ENCODE measurements at regions of chr1 and their contacts with region 1.

Region 1: GRCh38 chr1:221766210-221766609 is 24.3 kb upstream of the DUSP10 start:
- DNase-seq: no peak
- H3K4me3 ChIP-seq: no peak overlapping the region
- H3K27ac ChIP-seq: no peak overlapping the region
- H3K4me1 ChIP-seq: no peaks in the 10 kb centered on the region
- H3K27me3 ChIP-seq: no peaks in the 10 kb centered on the region
- CTCF ChIP-seq: no peak

Region 2: GRCh38 chr1:221729771-221730330 is 36.4 kb before region 1 on chr1:
- CTCF ChIA-PET with region 1: no interaction called
- POLR2A ChIA-PET with region 1: no interaction called
- intact Hi-C with region 1: loop called (anchors 1 kb)
- DNase-seq: no peak
- H3K4me3 ChIP-seq: no peak overlapping the region
- H3K27ac ChIP-seq: no peak overlapping the region
- H3K4me1 ChIP-seq: no peaks in the 10 kb centered on the region
- H3K27me3 ChIP-seq: no peaks in the 10 kb centered on the region
- CTCF ChIP-seq: no peak

Region 3: DNA sequence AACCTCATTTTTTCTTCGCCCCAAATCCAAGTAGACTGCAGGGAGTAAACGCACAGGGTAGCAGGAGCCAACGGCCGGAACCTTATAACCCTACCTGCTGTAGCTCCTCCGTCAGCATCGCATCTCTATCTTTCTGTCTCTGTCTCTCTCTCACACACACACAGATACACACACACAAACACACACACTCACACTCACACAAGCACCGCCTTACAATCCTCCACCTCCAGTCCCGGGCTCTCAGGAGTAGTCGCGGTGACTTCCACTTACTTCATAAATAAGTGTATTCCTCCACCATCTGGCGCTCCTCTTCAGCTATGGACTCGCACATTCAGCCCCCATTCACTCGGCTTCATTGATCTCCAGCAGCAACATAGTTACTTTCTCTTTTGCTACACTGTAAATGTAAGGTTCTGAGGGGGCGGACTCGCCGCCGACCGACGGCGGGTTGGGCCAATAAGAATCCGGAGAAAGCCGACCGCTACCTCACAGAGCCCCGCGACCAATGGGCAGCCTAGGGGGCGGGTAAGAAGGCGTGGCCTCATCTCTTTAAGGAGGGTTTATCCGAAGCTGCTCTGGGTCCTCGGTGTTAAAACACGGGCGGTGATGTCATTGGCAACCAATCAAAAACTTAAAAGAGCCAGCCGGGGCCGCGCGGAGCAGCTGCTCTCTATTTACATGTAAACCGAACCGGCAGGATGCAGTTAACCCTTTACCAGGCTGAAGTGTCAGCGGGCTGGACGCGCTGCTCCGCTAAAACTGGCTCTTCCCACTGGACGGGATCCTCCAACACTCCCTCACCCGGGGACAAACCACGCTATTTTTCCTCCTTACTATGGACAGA is 24.3 kb before region 1 on chr1 and contains the start of gene DUSP10:
- CTCF ChIA-PET with region 1: no interaction called
- POLR2A ChIA-PET with region 1: no interaction called
- intact Hi-C with region 1: no loop called
- DNase-seq: peak; percentile 97
- H3K4me3 ChIP-seq: peak within 1 kb of the TSS; percentile 51
- H3K27ac ChIP-seq: no peak within 1 kb of the TSS
- H3K4me1 ChIP-seq: no peaks in the 10 kb centered on the region
- H3K27me3 ChIP-seq: peaks cover 19% of the 10 kb centered on the region
- CTCF ChIP-seq: no peak
- total RNA-seq, gene DUSP10: 0.17 TPM in 1 of 2 replicates, not detected in the other

Measured in A673 (cell line).